PC-9 (cell line): ENCODE measurements at regions of chrX and their contacts with region 1.

Region 1: GRCh38 chrX:115560978-115561604 is at the start of gene PLS3:
- DNase-seq: peak; percentile 71 to 87
- H3K4me3 ChIP-seq: peak within 1 kb of the TSS; percentile 85
- H3K27ac ChIP-seq: peak within 1 kb of the TSS; percentile 96
- H3K4me1 ChIP-seq: peaks cover 40% of the 10 kb centered on the region
- H3K27me3 ChIP-seq: no peaks in the 10 kb centered on the region
- CTCF ChIP-seq: no peak; the same call in 1 of the 2 replicates
- total RNA-seq, gene PLS3: 221 and 257 TPM in 2 replicates

Region 2: GRCh38 chrX:115330498-115331168 is 230.5 kb before region 1 on chrX:
- CTCF ChIA-PET with region 1: interaction called, 5 read pairs
- POLR2A ChIA-PET with region 1: interaction called, 4 read pairs
- intact Hi-C with region 1: loop called (anchors 1 kb)
- DNase-seq: peak; percentile 57 to 65
- H3K4me3 ChIP-seq: no peak overlapping the region
- H3K27ac ChIP-seq: no peak overlapping the region
- H3K4me1 ChIP-seq: 0 out of 2 replicates have a peak, but pooled peaks cover 6% of the 10 kb centered on the region
- H3K27me3 ChIP-seq: no peaks in the 10 kb centered on the region
- CTCF ChIP-seq: peak; percentile 88

Region 3: DNA sequence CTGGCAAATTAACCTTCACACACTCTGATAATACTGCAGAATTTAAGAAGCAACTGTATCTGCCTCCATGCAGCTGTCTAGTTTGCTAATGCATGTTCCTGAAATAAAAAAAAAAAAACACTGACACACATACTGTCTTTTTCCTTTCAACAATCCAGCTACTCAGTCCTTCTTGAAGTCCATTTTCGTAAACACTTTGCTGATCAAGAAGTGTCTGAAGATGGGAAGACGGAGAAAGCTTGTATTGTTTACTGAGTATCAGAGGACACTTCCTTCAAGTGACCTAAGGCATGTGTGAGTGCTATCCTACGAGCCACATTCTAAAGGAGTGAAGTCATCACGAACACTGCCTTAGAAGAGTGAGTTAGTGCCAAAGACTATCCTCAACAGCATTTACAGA is 188.9 kb before region 1 on chrX:
- CTCF ChIA-PET with region 1: no interaction called
- POLR2A ChIA-PET with region 1: no interaction called
- intact Hi-C with region 1: loop called (anchors 1 kb)
- DNase-seq: peak; percentile 33 to 82
- H3K4me3 ChIP-seq: no peak overlapping the region
- H3K27ac ChIP-seq: peak overlapping the region; percentile 32
- H3K4me1 ChIP-seq: peaks cover 15% of the 10 kb centered on the region
- H3K27me3 ChIP-seq: no peaks in the 10 kb centered on the region
- CTCF ChIP-seq: no peak

Region 4: GRCh38 chrX:115573185-115573584 is 12.1 kb after region 1 on chrX:
- CTCF ChIA-PET with region 1: no interaction called
- POLR2A ChIA-PET with region 1: interaction called, 10 read pairs
- intact Hi-C with region 1: no loop called
- DNase-seq: no peak
- H3K4me3 ChIP-seq: no peak overlapping the region
- H3K27ac ChIP-seq: no peak overlapping the region
- H3K4me1 ChIP-seq: peaks cover 10% of the 10 kb centered on the region; the same call in 1 of the 2 replicates
- H3K27me3 ChIP-seq: no peaks in the 10 kb centered on the region
- CTCF ChIP-seq: no peak

Region 5: GRCh38 chrX:115602729-115603389 is 41.8 kb after region 1 on chrX:
- CTCF ChIA-PET with region 1: interaction called, 3 read pairs
- POLR2A ChIA-PET with region 1: interaction called, 6 read pairs
- intact Hi-C with region 1: loop called (anchors 2 kb)
- DNase-seq: peak in 1 of 2 experiments; percentile 72
- H3K4me3 ChIP-seq: no peak overlapping the region
- H3K27ac ChIP-seq: peak overlapping the region; percentile 61
- H3K4me1 ChIP-seq: peaks cover 27% of the 10 kb centered on the region
- H3K27me3 ChIP-seq: no peaks in the 10 kb centered on the region
- CTCF ChIP-seq: no peak

Region 6: GRCh38 chrX:115642895-115643530 is 81.9 kb after region 1 on chrX:
- CTCF ChIA-PET with region 1: interaction called, 4 read pairs
- POLR2A ChIA-PET with region 1: no interaction called
- intact Hi-C with region 1: loop called (anchors 2 kb)
- DNase-seq: peak; percentile 41 to 44
- H3K4me3 ChIP-seq: no peak overlapping the region
- H3K27ac ChIP-seq: peak overlapping the region; percentile 20; the same call in 1 of the 2 replicates
- H3K4me1 ChIP-seq: no peaks in the 10 kb centered on the region
- H3K27me3 ChIP-seq: no peaks in the 10 kb centered on the region
- CTCF ChIP-seq: peak; percentile 99